ENCODE measurements at regions of chr9 and their contacts with region 1.

Region 1: GRCh38 chr9:94794476-94795167 is 68.1 kb downstream of the AOPEP start:
- DNase-seq: no peak
- ATAC-seq: no peak
- H3K4me3 ChIP-seq: no peak overlapping the region
- H3K27ac ChIP-seq: no peak overlapping the region
- H3K4me1 ChIP-seq: peaks cover 9 to 19% of the 10 kb centered on the region in 2 donors
- H3K27me3 ChIP-seq: no peaks in the 10 kb centered on the region

Region 2: GRCh38 chr9:94757158-94757557 is 37.5 kb before region 1 on chr9:
- intact Hi-C with region 1: no loop called
- DNase-seq: no peak
- ATAC-seq: no peak
- H3K4me3 ChIP-seq: no peak overlapping the region
- H3K27ac ChIP-seq: no peak overlapping the region
- H3K4me1 ChIP-seq: no peaks in the 10 kb centered on the region
- H3K27me3 ChIP-seq: no peaks in the 10 kb centered on the region

Region 3: DNA sequence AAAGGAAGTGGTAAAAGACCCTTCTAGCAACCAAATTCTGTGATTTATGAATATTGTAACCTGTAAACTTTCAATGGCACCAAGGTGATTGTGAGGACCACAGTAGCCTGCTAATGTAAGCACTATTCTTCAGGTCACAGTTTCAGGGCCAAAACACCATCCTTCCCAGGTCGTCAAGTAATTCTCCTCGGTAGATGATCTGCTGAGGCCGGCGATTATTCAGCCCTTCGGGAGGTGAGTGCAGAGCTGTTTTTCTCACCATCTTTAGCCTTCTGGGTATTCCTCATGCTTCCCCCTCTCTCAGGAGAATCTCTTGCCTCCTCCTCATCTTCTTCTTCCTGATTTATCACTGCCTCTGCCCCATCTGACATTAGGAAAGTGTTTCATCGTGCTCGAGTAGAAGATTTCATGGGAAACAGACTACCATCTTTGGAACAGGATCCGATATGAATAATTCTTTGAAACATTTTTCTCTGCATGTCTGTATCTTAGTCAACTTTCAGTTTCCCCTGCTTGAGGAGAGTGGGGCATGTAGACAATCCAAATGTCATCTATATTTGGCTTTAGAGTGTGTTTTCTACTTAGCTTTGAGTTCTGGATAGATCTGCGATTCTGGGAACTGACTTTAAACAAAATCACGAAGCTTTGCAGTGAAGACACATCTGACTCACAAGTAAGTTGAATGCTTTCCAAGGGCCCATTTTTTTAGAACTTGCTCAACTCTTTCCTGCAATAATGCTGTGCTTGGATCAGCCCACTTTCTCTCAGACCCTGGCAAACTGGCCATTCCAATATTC is 105.8 kb after region 1 on chr9:
- intact Hi-C with region 1: loop called in 1 of 2 experiments (anchors 5 kb)
- DNase-seq: no peak
- ATAC-seq: peak; percentile 80
- H3K4me3 ChIP-seq: no peak overlapping the region
- H3K27ac ChIP-seq: peak overlapping the region; percentile 86 to 96
- H3K4me1 ChIP-seq: peaks cover 3 to 4% of the 10 kb centered on the region in 2 donors
- H3K27me3 ChIP-seq: no peaks in the 10 kb centered on the region